Heart left ventricle (tissue), 16 donors: ENCODE measurements at regions of chr1 and their contacts with region 1.

Region 1: GRCh38 chr1:24018611-24019580 is 38.8 kb upstream of the SRSF10 start:
- DNase-seq: peak; percentile 94 to 98 (median 97)
- ATAC-seq: peak; percentile 87 to 90 (median 88)
- H3K4me3 ChIP-seq: peak overlapping the region in 4 of 12 donors; percentile 1 to 29 (median 24)
- H3K27ac ChIP-seq: peak overlapping the region; percentile 78 to 95 (median 90)
- H3K4me1 ChIP-seq: peaks cover 3 to 85% (median 59%) of the 10 kb centered on the region in 12 donors
- H3K27me3 ChIP-seq: no peaks in the 10 kb centered on the region
- CTCF ChIP-seq: peak in 1 of 12 donors; percentile 5
- POLR2A ChIP-seq: peak in 1 of 2 donors; percentile 30

Region 2: GRCh38 chr1:23577056-23578004 is 441.6 kb before region 1 on chr1:
- intact Hi-C with region 1: no loop called
- DNase-seq: peak in 4 of 5 donors; percentile 56 to 71 (median 66)
- ATAC-seq: peak; percentile 52 to 86 (median 82)
- H3K4me3 ChIP-seq: peak overlapping the region in 8 of 12 donors; percentile 5 to 43 (median 26)
- H3K27ac ChIP-seq: peak overlapping the region; percentile 40 to 87 (median 79)
- H3K4me1 ChIP-seq: peaks cover 0 to 53% (median 34%) of the 10 kb centered on the region in 12 donors
- H3K27me3 ChIP-seq: no peaks in the 10 kb centered on the region
- CTCF ChIP-seq: no peak
- POLR2A ChIP-seq: no peak

Region 3: GRCh38 chr1:23979878-23980724 is 38.8 kb before region 1 on chr1 and contains the start of gene SRSF10:
- intact Hi-C with region 1: loop called in 9 of 10 experiments (anchors 1 to 5 kb)
- DNase-seq: peak; percentile 99
- ATAC-seq: peak; percentile 98 to 100 (median 99)
- H3K4me3 ChIP-seq: peak within 1 kb of the TSS; percentile 69 to 97 (median 90)
- H3K27ac ChIP-seq: peak within 1 kb of the TSS; percentile 85 to 99 (median 97)
- H3K4me1 ChIP-seq: peaks cover 5 to 55% (median 40%) of the 10 kb centered on the region in 12 donors
- H3K27me3 ChIP-seq: no peaks in the 10 kb centered on the region
- CTCF ChIP-seq: peak; percentile 14 to 79 (median 40)
- POLR2A ChIP-seq: peak; percentile 95 to 97
- total RNA-seq, gene SRSF10: 34.3 to 60.9 (median 49.4) TPM